ENCODE measurements at regions of chr12 and their contacts with region 1.

Region 1: DNA sequence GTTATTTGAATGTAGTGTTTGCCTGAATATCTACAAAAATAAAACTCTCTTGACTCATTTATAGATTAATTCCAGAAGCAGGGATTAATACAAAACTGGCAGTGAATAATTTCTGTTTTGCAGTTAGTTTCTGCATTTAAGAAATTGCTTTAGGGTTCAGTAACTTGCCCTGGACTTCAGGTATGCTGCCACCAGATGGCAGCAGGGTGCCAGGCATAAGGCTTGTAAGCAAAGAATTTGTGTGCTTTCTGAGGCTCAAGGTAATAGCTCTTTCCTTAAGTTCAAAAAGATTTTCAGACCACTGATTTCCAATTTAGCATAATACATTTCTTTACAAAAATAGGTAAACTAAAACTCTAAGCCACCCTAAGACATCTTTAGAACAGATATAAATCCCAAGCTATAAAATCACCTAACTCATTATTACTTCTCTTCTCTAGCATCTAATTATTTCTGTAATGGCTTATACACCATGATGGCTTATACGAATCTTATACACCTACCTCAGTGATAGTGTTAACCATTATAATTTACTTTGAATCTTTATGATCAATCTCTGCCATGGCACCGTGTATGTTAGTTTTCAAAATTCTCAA is 398.3 kb downstream of the APAF1 start:
- DNase-seq: peak; percentile 38 to 76
- ATAC-seq: peak; percentile 67 to 80; a peak in 3 of 6 replicates
- H3K4me3 ChIP-seq: no peak overlapping the region
- H3K27ac ChIP-seq: no peak overlapping the region
- H3K4me1 ChIP-seq: no peaks in the 10 kb centered on the region
- CTCF ChIP-seq: peak; percentile 92
- EP300 ChIP-seq: no peak
- POLR2A ChIP-seq: no peak
- RAD21 ChIP-seq: peak; percentile 86 to 94

Region 2: GRCh38 chr12:99053616-99054362 is 10.4 kb after region 1 on chr12:
- CTCF ChIA-PET with region 1: interaction called, 22 read pairs
- POLR2A ChIA-PET with region 1: no interaction called
- DNase-seq: no peak
- ATAC-seq: no peak
- H3K4me3 ChIP-seq: no peak overlapping the region
- H3K27ac ChIP-seq: no peak overlapping the region
- H3K4me1 ChIP-seq: no peaks in the 10 kb centered on the region
- CTCF ChIP-seq: no peak
- EP300 ChIP-seq: no peak
- POLR2A ChIP-seq: no peak
- RAD21 ChIP-seq: no peak

Region 3: GRCh38 chr12:99131751-99132199 is 88.4 kb after region 1 on chr12:
- CTCF ChIA-PET with region 1: no interaction called
- POLR2A ChIA-PET with region 1: no interaction called
- DNase-seq: no peak
- ATAC-seq: no peak
- H3K4me3 ChIP-seq: no peak overlapping the region
- H3K27ac ChIP-seq: no peak overlapping the region
- H3K4me1 ChIP-seq: no peaks in the 10 kb centered on the region
- CTCF ChIP-seq: no peak
- EP300 ChIP-seq: no peak
- POLR2A ChIP-seq: no peak
- RAD21 ChIP-seq: no peak

Region 4: GRCh38 chr12:99658671-99659349 is 615.4 kb after region 1 on chr12:
- CTCF ChIA-PET with region 1: interaction called, 107 read pairs
- POLR2A ChIA-PET with region 1: interaction called, 9 read pairs
- DNase-seq: peak in 1 of 2 experiments; percentile 30
- ATAC-seq: no peak
- H3K4me3 ChIP-seq: no peak overlapping the region
- H3K27ac ChIP-seq: no peak overlapping the region
- H3K4me1 ChIP-seq: no peaks in the 10 kb centered on the region
- CTCF ChIP-seq: peak; percentile 52
- EP300 ChIP-seq: no peak
- POLR2A ChIP-seq: no peak
- RAD21 ChIP-seq: peak; percentile 65 to 74

Region 5: DNA sequence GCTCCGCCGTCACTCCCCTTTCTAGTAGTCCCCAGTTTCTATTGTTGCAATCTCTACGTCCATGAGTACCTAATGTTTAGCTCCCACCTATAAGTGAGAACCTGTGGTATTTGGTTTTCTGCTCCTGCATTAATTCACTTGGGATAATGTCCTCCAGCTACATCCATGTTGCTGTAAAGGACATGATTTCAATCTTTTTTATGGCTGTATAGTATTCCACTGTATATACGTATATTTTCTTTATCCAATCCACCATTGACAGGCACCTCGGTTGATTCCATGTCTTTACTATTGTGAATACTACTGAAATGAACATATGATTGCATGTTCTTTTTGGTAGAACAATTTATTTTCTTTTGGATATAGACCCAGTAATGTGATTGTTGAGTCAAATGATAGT is 826.7 kb after region 1 on chr12:
- CTCF ChIA-PET with region 1: no interaction called
- POLR2A ChIA-PET with region 1: no interaction called
- DNase-seq: no peak
- ATAC-seq: no peak
- H3K4me3 ChIP-seq: no peak overlapping the region
- H3K27ac ChIP-seq: no peak overlapping the region
- H3K4me1 ChIP-seq: no peaks in the 10 kb centered on the region
- CTCF ChIP-seq: no peak
- EP300 ChIP-seq: no peak
- POLR2A ChIP-seq: no peak
- RAD21 ChIP-seq: no peak

Measured in A549 (cell line).